Activated T-helper 1 cell treated with anti-CD3 and anti-CD28 coated beads, Interleukin-12 subunit alpha, Interleukin-12 subunit beta, Interleukin-2, Interleukin-4 antibody, amounts not matched to agents 30 ng/mL and 10 ng/mL and 1 ng/mL, durations not matched to agents 14 hours and 24 hours and 36 hours (primary cell): ENCODE measurements at regions of chr20 and their contacts with region 1.

Region 1: DNA sequence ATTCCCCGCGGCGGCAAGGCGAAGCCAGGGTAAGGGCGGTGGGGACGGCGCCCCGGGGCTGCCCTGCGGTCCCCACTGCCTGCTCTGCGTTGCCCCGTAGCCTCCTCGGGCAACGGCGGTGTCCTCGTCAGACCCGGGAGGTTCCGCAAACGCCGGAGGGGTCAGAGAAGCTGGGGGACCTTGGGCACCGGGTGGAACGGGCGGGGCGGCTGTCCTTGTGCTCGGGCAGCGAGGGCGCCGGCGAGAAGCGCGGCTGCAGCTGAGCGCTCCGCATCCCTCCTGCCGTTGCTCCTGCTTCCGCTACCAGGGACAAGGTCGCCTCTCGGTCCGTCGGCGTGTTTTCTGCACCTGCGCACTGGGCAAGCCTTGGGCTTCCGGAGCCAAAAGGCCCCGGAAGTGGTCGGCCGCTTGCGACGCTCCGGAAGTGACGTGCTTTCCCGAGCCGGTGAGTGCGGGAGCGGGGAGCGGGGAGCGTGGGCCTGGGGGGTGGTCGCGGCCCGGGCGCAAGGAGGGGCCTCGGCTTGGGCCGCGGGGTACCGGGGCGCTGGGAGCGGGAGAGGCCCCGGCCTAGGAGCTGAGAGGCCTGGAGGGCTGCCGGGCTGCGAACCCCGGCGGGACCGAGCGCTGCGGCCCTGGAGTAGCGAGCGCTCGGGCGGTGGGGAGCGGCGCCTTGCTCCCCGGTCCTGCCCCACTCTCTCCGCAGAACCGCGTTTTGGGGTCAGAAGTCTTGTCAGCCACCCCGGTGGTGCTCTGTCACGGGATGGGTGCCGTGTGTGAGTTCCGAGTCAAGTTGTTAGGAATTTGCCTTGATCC is at the start of gene MTG2:
- DNase-seq: peak; percentile 95
- H3K4me3 Mint-ChIP-seq: peak within 1 kb of the TSS; percentile 92
- H3K27ac Mint-ChIP-seq: peak within 1 kb of the TSS; percentile 93
- H3K4me1 Mint-ChIP-seq: peaks cover 39% of the 10 kb centered on the region
- H3K27me3 Mint-ChIP-seq: no peaks in the 10 kb centered on the region
- total RNA-seq, gene MTG2: 45.4 and 46.3 TPM in 2 replicates

Region 2: DNA sequence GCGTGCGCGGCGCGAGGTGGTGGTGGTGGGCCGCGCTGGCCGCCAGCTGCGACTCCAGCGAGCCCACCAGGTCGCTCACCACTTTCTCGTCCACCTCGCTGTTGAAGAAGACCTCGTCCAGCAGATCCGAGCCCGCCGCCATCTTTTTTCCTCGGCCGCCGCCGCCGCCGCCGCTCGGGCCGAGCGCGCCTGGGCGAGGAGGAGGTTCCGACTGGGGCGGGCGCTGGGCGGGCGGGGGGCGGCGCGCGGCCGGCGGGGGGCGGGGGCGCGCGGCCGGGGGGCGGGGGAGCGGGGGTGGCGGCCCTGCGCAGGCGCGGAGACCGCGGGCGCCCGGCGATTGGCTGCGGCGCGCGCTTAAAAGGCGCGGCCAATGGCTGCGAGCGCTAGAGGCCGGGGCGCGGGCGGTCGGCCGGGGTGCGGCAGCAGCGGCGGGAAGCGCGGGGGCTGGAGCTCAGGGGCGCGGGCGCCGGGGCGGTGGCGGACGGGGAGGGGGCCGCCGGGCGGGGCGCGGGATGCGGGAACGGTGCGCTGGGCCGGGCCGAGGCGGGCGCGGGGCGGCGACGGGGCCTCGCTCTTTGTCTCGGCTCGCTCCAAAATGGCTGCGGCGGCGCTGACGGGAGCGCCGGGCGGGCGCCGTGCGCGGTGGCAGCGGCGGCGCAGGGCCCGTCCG is 117.0 kb before region 1 on chr20 and contains the start of gene TAF4:
- intact Hi-C with region 1: loop called (anchors 2 kb)
- DNase-seq: peak; percentile 80
- H3K4me3 Mint-ChIP-seq: peak within 1 kb of the TSS; percentile 84
- H3K27ac Mint-ChIP-seq: peak within 1 kb of the TSS; percentile 84
- H3K4me1 Mint-ChIP-seq: peaks cover 42% of the 10 kb centered on the region
- H3K27me3 Mint-ChIP-seq: peaks cover 6% of the 10 kb centered on the region
- total RNA-seq, gene TAF4: 26.3 and 28.3 TPM in 2 replicates